ENCODE measurements at regions of chr6 and their contacts with region 1.

Region 1: DNA sequence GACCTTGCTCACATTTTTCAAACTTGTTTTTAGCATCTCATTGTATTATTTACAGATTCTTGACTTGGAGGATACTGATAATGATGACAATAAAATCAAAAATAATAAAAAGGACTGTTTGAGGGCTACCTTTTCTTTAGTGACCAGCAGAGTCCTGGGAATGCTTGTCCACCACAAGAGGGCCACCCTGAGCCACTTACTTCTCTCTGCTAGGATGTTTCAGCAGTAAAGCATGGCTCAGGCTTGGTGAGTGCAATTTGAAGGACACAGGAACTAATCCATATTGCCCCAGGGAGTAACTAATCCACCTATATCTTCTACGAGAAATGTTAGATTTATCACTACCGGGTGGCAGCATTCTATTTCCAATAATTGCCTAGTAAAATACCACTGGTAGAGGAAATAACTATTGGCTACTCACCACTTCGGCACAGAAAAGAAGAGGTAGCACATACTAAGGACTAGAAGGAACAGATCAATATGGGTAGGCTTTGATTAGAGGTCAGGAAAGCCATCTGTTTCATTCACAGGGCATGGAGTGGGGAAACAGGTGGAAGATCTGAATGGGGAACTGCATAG is 5.8 kb upstream of the KIAA0408 start:
- DNase-seq: peak; percentile 62
- H3K4me3 ChIP-seq: no peak overlapping the region
- H3K27ac ChIP-seq: peak overlapping the region in 1 of 2 donors; percentile 52
- H3K4me1 ChIP-seq: no peaks in the 10 kb centered on the region
- H3K27me3 ChIP-seq: no peaks in the 10 kb centered on the region
- CTCF ChIP-seq: peak; percentile 50 to 73 (median 72)
- POLR2A ChIP-seq: no peak

Region 2: GRCh38 chr6:127516666-127517273 is 51.8 kb after region 1 on chr6:
- intact Hi-C with region 1: loop called (anchors 5 kb)
- DNase-seq: no peak
- H3K4me3 ChIP-seq: peak overlapping the region; percentile 44 to 52
- H3K27ac ChIP-seq: no peak overlapping the region
- H3K4me1 ChIP-seq: no peaks in the 10 kb centered on the region
- H3K27me3 ChIP-seq: peaks cover 8% of the 10 kb centered on the region
- CTCF ChIP-seq: peak in 2 of 4 experiments; percentile 33 to 44
- POLR2A ChIP-seq: no peak

Region 3: GRCh38 chr6:127539272-127539671 is 74.3 kb after region 1 on chr6:
- intact Hi-C with region 1: loop called (anchors 2 kb)
- DNase-seq: no peak
- H3K4me3 ChIP-seq: no peak overlapping the region
- H3K27ac ChIP-seq: no peak overlapping the region
- H3K4me1 ChIP-seq: no peaks in the 10 kb centered on the region
- H3K27me3 ChIP-seq: no peaks in the 10 kb centered on the region
- CTCF ChIP-seq: peak in 3 of 4 experiments; percentile 38 to 51 (median 46)
- POLR2A ChIP-seq: no peak